Mammary epithelial cell (primary cell): ENCODE measurements at regions of chr1 and their contacts with region 1.

Region 1: GRCh38 chr1:170445096-170445495 is 86.9 kb upstream of the GORAB start:
- DNase-seq: peak; percentile 59
- H3K4me3 ChIP-seq: no peak overlapping the region
- H3K27ac ChIP-seq: no peak overlapping the region
- H3K4me1 ChIP-seq: peaks cover 8% of the 10 kb centered on the region
- H3K27me3 ChIP-seq: peaks cover 4% of the 10 kb centered on the region
- CTCF ChIP-seq: no peak

Region 2: GRCh38 chr1:170776777-170777176 is 331.7 kb after region 1 on chr1:
- CTCF ChIA-PET with region 1: no interaction called
- dilution Hi-C with region 1: loop called (anchors 5 kb)
- in situ Hi-C with region 1: no loop called
- intact Hi-C with region 1: no loop called
- DNase-seq: no peak
- H3K4me3 ChIP-seq: no peak overlapping the region
- H3K27ac ChIP-seq: no peak overlapping the region
- H3K4me1 ChIP-seq: no peaks in the 10 kb centered on the region
- H3K27me3 ChIP-seq: no peaks in the 10 kb centered on the region
- CTCF ChIP-seq: no peak